ENCODE measurements at regions of chr3 and their contacts with region 1.

Region 1: DNA sequence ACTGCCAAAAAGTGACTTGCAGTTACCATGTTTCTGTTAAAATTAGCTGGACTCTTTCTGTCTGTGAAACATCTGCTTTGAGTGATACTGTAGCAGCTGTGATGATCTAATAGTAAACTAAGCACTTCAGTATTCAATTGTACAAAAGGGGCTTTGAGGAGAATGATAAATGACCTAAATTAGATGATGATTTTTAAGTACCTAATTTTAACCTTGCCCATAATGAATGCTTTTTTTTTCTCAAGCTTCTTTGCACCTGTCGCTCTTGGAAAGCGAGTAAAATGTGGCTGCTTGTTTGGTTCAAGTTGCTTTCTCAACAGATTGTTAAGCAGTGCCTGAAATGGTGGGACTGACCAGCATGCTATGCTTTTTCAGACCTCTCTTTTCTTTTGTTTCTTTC is 752.3 kb downstream of the EPHA3 start:
- DNase-seq: no peak
- ATAC-seq: no peak
- H3K4me3 ChIP-seq: no peak overlapping the region
- H3K4me3 Mint-ChIP-seq: no peak overlapping the region
- H3K27ac ChIP-seq: no peak overlapping the region
- H3K27ac Mint-ChIP-seq: no peak overlapping the region
- H3K4me1 ChIP-seq: no peaks in the 10 kb centered on the region
- H3K4me1 Mint-ChIP-seq: no peaks in the 10 kb centered on the region
- H3K27me3 ChIP-seq: no peaks in the 10 kb centered on the region
- H3K27me3 Mint-ChIP-seq: no peaks in the 10 kb centered on the region
- CTCF ChIP-seq: no peak

Region 2: GRCh38 chr3:89787485-89787884 is 72.3 kb before region 1 on chr3:
- CTCF ChIA-PET with region 1: no interaction called
- POLR2A ChIA-PET with region 1: no interaction called
- intact Hi-C with region 1: no loop called
- DNase-seq: no peak
- ATAC-seq: no peak
- H3K4me3 ChIP-seq: no peak overlapping the region
- H3K4me3 Mint-ChIP-seq: no peak overlapping the region
- H3K27ac ChIP-seq: no peak overlapping the region
- H3K27ac Mint-ChIP-seq: no peak overlapping the region
- H3K4me1 ChIP-seq: no peaks in the 10 kb centered on the region
- H3K4me1 Mint-ChIP-seq: no peaks in the 10 kb centered on the region
- H3K27me3 ChIP-seq: no peaks in the 10 kb centered on the region
- H3K27me3 Mint-ChIP-seq: no peaks in the 10 kb centered on the region
- CTCF ChIP-seq: no peak

Region 3: DNA sequence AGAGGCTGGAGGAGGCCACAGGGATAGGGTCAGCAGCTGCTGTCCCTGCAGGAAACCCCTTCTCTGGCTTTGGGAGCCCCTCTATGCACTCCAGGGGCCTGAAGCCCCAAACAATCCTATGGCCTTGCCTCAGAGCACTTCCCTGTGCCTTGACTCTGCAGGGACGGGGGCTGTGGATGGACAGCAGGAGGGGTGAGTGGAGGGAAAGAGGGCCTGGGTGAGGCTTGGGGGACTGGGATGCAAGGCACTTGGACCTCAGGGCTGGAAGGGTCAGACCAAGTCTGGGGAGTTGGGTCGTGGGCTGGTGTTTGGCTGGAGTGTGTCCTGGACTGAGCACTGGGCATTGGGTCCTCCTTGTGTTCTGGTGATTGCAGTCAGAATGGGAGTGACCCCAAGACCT is 17.5 kb after region 1 on chr3:
- CTCF ChIA-PET with region 1: no interaction called
- POLR2A ChIA-PET with region 1: no interaction called
- intact Hi-C with region 1: loop called in 1 of 2 experiments (anchors 1 kb)
- DNase-seq: no peak
- ATAC-seq: no peak
- H3K4me3 ChIP-seq: no peak overlapping the region
- H3K4me3 Mint-ChIP-seq: no peak overlapping the region
- H3K27ac ChIP-seq: no peak overlapping the region
- H3K27ac Mint-ChIP-seq: no peak overlapping the region
- H3K4me1 ChIP-seq: no peaks in the 10 kb centered on the region
- H3K4me1 Mint-ChIP-seq: no peaks in the 10 kb centered on the region
- H3K27me3 ChIP-seq: no peaks in the 10 kb centered on the region
- H3K27me3 Mint-ChIP-seq: no peaks in the 10 kb centered on the region
- CTCF ChIP-seq: no peak

Measured in CD8-positive, alpha-beta T cell (primary cell).